Aorta (tissue), 5 donors: ENCODE measurements at regions of chr2 and their contacts with region 1.

Region 1: GRCh38 chr2:215460682-215461382 is 25.0 kb upstream of the FN1 start:
- DNase-seq: no peak
- ATAC-seq: peak; percentile 72
- H3K4me3 ChIP-seq: no peak overlapping the region
- H3K27ac ChIP-seq: peak overlapping the region in 1 of 2 donors; percentile 57
- H3K4me1 ChIP-seq: peaks cover 0 to 3% of the 10 kb centered on the region in 2 donors
- H3K27me3 ChIP-seq: no peaks in the 10 kb centered on the region

Region 2: DNA sequence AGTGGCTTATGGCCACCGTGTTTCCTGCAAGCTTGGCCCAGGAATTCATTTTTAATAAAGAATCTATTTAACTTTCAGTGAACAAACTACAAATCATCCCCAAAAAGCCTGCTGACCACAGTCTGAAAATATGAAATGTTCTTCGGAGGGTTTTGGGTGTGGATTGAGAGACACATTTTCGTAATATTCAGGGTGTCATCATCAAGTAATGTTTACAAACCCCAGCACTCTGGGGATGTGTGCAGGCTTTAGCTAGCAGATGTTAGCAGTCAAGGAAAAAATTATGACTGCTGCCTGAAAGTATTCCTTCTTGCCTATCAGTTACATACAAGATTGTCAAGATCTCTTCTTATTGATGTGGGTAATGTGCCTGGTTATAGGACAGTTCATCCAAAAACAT is 119.0 kb after region 1 on chr2:
- intact Hi-C with region 1: loop called in 1 of 2 experiments (anchors 5 kb)
- DNase-seq: no peak
- ATAC-seq: no peak
- H3K4me3 ChIP-seq: no peak overlapping the region
- H3K27ac ChIP-seq: no peak overlapping the region
- H3K4me1 ChIP-seq: no peaks in the 10 kb centered on the region
- H3K27me3 ChIP-seq: no peaks in the 10 kb centered on the region

Region 3: GRCh38 chr2:215657844-215658243 is 197.0 kb after region 1 on chr2:
- intact Hi-C with region 1: no loop called
- DNase-seq: no peak
- ATAC-seq: peak; percentile 51
- H3K4me3 ChIP-seq: no peak overlapping the region
- H3K27ac ChIP-seq: peak overlapping the region in 1 of 2 donors; percentile 79
- H3K4me1 ChIP-seq: peaks cover 7 to 11% of the 10 kb centered on the region in 2 donors
- H3K27me3 ChIP-seq: no peaks in the 10 kb centered on the region

Region 4: GRCh38 chr2:215684448-215685237 is 223.8 kb after region 1 on chr2:
- intact Hi-C with region 1: no loop called
- DNase-seq: no peak
- ATAC-seq: no peak
- H3K4me3 ChIP-seq: no peak overlapping the region
- H3K27ac ChIP-seq: no peak overlapping the region
- H3K4me1 ChIP-seq: no peaks in the 10 kb centered on the region
- H3K27me3 ChIP-seq: no peaks in the 10 kb centered on the region